B cell (primary cell): ENCODE measurements at regions of chr21 and their contacts with region 1.

Region 1: DNA sequence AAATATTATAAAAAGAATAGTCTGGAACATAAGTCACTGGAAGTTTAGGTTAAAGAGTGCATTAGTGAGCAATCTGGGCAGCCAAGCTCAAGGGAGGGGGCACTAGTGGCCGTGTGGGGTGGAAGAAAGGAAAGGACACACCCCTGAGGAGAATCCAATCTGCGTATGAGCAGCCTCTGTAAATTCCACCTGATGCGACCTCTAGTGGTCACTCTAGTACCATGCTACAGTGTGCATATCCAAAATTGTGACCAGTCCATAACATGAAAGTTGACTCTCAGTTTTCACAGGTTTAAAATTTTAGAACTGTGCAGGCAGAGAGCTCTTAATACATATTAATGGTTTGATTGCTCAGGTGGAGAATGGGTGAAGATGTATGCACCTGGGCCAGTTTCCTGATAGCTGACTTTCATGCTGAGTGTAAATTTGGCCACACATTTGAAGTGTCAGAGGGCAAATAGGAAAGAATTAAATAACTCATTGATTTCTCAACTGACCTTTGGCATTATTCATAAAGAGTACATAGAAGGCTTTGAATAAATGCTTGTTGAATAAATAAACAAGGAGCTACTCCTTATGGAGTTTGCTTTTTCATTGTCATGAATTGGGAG is 105.9 kb upstream of the C21orf91 start:
- DNase-seq: peak; percentile 67
- ATAC-seq: peak; percentile 87
- H3K4me3 ChIP-seq: no peak overlapping the region
- H3K4me3 Mint-ChIP-seq: no peak overlapping the region
- H3K27ac ChIP-seq: no peak overlapping the region
- H3K27ac Mint-ChIP-seq: no peak overlapping the region
- H3K4me1 ChIP-seq: no peaks in the 10 kb centered on the region
- H3K4me1 Mint-ChIP-seq: no peaks in the 10 kb centered on the region
- H3K27me3 ChIP-seq: no peaks in the 10 kb centered on the region
- H3K27me3 Mint-ChIP-seq: peaks cover 7% of the 10 kb centered on the region
- CTCF ChIP-seq: peak; percentile 96

Region 2: GRCh38 chr21:17387030-17387617 is 538.0 kb before region 1 on chr21:
- CTCF ChIA-PET with region 1: interaction called, 9 read pairs
- POLR2A ChIA-PET with region 1: no interaction called
- intact Hi-C with region 1: loop called (anchors 2 kb)
- DNase-seq: peak; percentile 56
- ATAC-seq: no peak
- H3K4me3 ChIP-seq: no peak overlapping the region
- H3K4me3 Mint-ChIP-seq: no peak overlapping the region
- H3K27ac ChIP-seq: no peak overlapping the region
- H3K27ac Mint-ChIP-seq: no peak overlapping the region
- H3K4me1 ChIP-seq: no peaks in the 10 kb centered on the region
- H3K4me1 Mint-ChIP-seq: peaks cover 2% of the 10 kb centered on the region
- H3K27me3 ChIP-seq: no peaks in the 10 kb centered on the region
- H3K27me3 Mint-ChIP-seq: no peaks in the 10 kb centered on the region
- CTCF ChIP-seq: peak; percentile 94

Region 3: GRCh38 chr21:17667256-17667655 is 257.8 kb before region 1 on chr21:
- CTCF ChIA-PET with region 1: interaction called, 10 read pairs
- POLR2A ChIA-PET with region 1: no interaction called
- intact Hi-C with region 1: no loop called
- DNase-seq: no peak
- ATAC-seq: no peak
- H3K4me3 ChIP-seq: no peak overlapping the region
- H3K4me3 Mint-ChIP-seq: no peak overlapping the region
- H3K27ac ChIP-seq: no peak overlapping the region
- H3K27ac Mint-ChIP-seq: no peak overlapping the region
- H3K4me1 ChIP-seq: no peaks in the 10 kb centered on the region
- H3K4me1 Mint-ChIP-seq: no peaks in the 10 kb centered on the region
- H3K27me3 ChIP-seq: no peaks in the 10 kb centered on the region
- H3K27me3 Mint-ChIP-seq: peaks cover 18% of the 10 kb centered on the region
- CTCF ChIP-seq: no peak

Region 4: DNA sequence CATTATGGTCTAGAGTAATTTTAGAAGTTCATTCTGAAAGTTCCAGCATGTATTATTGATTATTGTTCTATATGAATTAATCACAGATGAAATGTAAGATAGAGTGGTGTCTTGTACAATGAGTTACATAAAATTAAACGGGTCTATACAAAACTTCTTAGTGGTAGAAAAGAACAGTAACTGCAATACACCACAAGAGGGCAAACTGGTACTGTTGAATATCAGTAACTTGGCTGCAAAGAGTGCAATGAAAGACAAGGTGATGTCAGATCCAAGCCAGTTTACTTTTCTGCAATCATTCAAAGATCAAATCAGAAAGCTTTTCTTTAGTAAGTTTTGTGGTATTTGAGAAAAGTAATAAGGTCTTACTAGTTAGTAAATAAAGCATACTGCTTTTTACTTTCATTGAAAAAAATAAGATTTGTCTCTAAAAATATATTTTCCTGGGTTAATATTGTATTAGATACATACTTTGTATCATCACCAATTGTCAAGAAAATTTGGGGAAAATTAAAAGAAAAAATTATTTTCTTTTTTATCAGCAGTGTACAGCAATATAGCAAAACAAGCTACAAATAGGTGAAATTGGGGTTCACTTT is 246.0 kb before region 1 on chr21:
- CTCF ChIA-PET with region 1: interaction called, 32 read pairs
- POLR2A ChIA-PET with region 1: no interaction called
- intact Hi-C with region 1: loop called (anchors 1 kb)
- DNase-seq: peak; percentile 71
- ATAC-seq: peak; percentile 78
- H3K4me3 ChIP-seq: no peak overlapping the region
- H3K4me3 Mint-ChIP-seq: no peak overlapping the region
- H3K27ac ChIP-seq: no peak overlapping the region
- H3K27ac Mint-ChIP-seq: no peak overlapping the region
- H3K4me1 ChIP-seq: no peaks in the 10 kb centered on the region
- H3K4me1 Mint-ChIP-seq: no peaks in the 10 kb centered on the region
- H3K27me3 ChIP-seq: no peaks in the 10 kb centered on the region
- H3K27me3 Mint-ChIP-seq: no peaks in the 10 kb centered on the region
- CTCF ChIP-seq: peak; percentile 92

Region 5: DNA sequence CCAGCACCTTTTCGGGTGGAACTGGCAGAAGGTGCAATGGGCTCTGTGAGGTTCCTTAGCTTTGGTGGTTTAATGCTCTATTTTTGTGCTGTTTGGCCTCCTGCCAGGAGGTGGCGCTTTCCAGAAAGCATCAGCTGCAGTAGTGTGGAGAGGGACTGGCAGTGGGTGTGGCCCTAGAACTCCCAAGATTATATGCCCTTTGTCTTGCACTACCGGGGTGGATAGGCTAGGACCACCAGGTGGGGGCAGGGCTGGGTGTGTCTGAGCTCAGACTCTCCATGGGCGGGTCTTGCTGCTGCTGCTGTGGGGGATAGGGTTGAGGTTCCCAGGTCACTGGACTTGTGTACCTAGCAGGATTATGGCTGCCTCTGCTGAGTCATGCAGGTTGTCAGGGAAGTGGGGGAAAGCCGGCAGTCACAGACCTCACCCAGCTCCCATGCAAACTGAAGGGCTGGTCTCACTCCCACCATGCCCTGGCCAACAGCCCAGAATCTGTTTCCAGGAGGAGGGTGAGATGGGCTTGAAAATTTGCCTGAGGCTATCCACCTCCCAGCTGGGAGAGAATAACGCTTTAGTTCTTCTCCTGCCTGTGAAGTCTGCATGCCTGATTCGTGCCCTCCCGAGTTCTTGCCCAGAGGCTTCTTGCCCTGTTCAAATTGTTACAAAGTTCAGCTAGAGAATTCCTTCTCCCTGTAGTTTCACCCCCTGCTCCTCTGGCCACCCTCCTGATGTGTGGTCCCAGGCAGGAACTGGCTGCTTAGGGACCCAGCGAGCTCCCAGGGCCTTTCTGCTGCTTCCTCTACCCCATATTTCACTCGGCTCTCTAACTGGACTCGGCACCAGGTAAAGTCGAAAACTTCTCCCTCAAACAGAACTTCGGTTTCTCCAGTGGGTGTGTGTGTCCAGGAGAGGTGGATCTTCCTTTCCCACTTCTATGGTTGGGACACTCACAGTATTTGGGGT is 235.9 kb before region 1 on chr21:
- CTCF ChIA-PET with region 1: interaction called, 10 read pairs
- POLR2A ChIA-PET with region 1: no interaction called
- intact Hi-C with region 1: no loop called
- DNase-seq: peak; percentile 30
- ATAC-seq: no peak
- H3K4me3 ChIP-seq: no peak overlapping the region
- H3K4me3 Mint-ChIP-seq: no peak overlapping the region
- H3K27ac ChIP-seq: no peak overlapping the region
- H3K27ac Mint-ChIP-seq: no peak overlapping the region
- H3K4me1 ChIP-seq: peaks cover 2 to 3% of the 10 kb centered on the region in 2 donors
- H3K4me1 Mint-ChIP-seq: peaks cover 6% of the 10 kb centered on the region
- H3K27me3 ChIP-seq: peaks cover 0 to 3% (median 0%) of the 10 kb centered on the region in 4 experiments
- H3K27me3 Mint-ChIP-seq: peaks cover 6% of the 10 kb centered on the region
- CTCF ChIP-seq: peak; percentile 49

Region 6: DNA sequence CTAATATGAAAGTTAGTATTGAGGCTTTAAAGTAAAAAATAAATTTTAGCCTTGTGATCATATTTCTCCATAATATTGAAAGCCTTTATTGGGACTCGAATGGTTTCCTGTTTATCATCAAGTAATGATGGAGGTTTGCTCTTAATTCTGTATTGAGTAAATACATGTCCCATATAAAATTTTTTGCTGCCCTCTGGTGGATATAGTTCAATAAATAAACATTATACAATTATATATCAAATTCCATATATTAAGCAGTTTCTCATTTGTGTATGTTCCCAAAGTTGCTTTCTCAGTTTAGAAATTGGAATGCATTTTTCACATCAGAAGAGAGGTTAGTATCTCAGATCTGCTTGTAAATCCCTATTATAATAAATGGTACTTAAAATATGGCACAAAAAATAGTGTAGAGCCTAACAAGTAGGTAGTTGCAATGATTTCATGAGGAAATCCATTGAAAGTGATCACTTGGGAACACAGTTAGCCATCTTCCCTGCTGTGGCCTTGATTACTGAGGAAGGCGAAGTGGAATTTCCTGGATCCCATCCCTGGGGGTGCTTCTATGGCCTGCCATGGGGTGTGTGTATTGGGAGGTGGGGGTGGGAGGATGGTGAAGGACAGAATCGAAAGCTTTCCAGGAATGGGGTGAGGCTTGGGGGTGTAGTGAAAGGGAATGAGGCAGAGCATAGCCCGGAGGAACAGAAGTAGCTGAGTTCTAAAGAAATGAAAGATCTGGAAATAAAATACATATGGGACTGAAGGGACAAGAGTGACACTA is 21.9 kb before region 1 on chr21:
- CTCF ChIA-PET with region 1: interaction called, 19 read pairs
- POLR2A ChIA-PET with region 1: no interaction called
- intact Hi-C with region 1: no loop called
- DNase-seq: peak; percentile 57
- ATAC-seq: peak; percentile 24
- H3K4me3 ChIP-seq: no peak overlapping the region
- H3K4me3 Mint-ChIP-seq: no peak overlapping the region
- H3K27ac ChIP-seq: no peak overlapping the region
- H3K27ac Mint-ChIP-seq: no peak overlapping the region
- H3K4me1 ChIP-seq: peaks cover 0 to 6% of the 10 kb centered on the region in 2 donors
- H3K4me1 Mint-ChIP-seq: peaks cover 8% of the 10 kb centered on the region
- H3K27me3 ChIP-seq: no peaks in the 10 kb centered on the region
- H3K27me3 Mint-ChIP-seq: no peaks in the 10 kb centered on the region
- CTCF ChIP-seq: peak; percentile 72

Region 7: GRCh38 chr21:17911628-17912027 is 13.5 kb before region 1 on chr21:
- CTCF ChIA-PET with region 1: interaction called, 50 read pairs
- POLR2A ChIA-PET with region 1: no interaction called
- intact Hi-C with region 1: no loop called
- DNase-seq: no peak
- ATAC-seq: no peak
- H3K4me3 ChIP-seq: no peak overlapping the region
- H3K4me3 Mint-ChIP-seq: no peak overlapping the region
- H3K27ac ChIP-seq: no peak overlapping the region
- H3K27ac Mint-ChIP-seq: no peak overlapping the region
- H3K4me1 ChIP-seq: no peaks in the 10 kb centered on the region
- H3K4me1 Mint-ChIP-seq: no peaks in the 10 kb centered on the region
- H3K27me3 ChIP-seq: no peaks in the 10 kb centered on the region
- H3K27me3 Mint-ChIP-seq: no peaks in the 10 kb centered on the region
- CTCF ChIP-seq: no peak

Region 8: DNA sequence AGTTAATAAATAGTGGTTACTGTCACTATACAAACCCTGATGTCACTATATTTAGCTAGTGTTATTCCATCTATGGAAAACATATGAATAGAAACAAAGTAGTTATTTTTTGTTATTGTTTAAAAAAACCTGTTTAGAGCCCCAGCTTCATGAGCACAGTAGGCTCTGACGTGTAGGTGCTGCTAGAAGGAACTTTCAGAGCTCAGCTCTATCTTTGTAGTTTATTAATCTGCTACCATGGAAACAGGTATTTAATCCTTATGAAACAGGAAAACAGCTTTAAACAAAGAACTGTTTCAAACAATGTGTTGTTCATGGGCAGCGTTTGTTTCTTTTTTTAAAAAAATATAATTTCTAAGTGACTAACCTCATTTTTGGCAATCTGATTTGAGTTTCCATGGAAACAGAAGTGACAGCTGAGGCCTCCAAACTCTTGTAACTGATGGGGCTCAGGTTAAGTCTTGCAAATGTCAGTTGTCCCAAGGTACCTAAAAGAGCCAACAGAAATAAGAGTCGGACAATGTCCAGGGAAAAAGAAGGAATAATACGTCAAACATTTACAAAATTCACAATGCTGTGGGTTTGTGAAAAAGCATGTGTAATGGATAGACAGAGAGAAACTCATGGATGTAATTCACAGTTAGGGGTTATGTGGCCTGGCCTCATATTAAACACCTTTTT is 56.1 kb after region 1 on chr21:
- CTCF ChIA-PET with region 1: no interaction called
- POLR2A ChIA-PET with region 1: no interaction called
- intact Hi-C with region 1: no loop called
- DNase-seq: no peak
- ATAC-seq: no peak
- H3K4me3 ChIP-seq: no peak overlapping the region
- H3K4me3 Mint-ChIP-seq: no peak overlapping the region
- H3K27ac ChIP-seq: no peak overlapping the region
- H3K27ac Mint-ChIP-seq: no peak overlapping the region
- H3K4me1 ChIP-seq: no peaks in the 10 kb centered on the region
- H3K4me1 Mint-ChIP-seq: no peaks in the 10 kb centered on the region
- H3K27me3 ChIP-seq: no peaks in the 10 kb centered on the region
- H3K27me3 Mint-ChIP-seq: no peaks in the 10 kb centered on the region
- CTCF ChIP-seq: no peak